ENCODE measurements at regions of chr6 and their contacts with region 1.

Region 1: GRCh38 chr6:13487122-13488014 is at the start of gene GFOD1:
- DNase-seq: peak; percentile 82 to 83
- ATAC-seq: peak; percentile 75 to 84
- H3K4me3 ChIP-seq: peak within 1 kb of the TSS; percentile 80 to 96 (median 89)
- H3K27ac ChIP-seq: peak within 1 kb of the TSS; percentile 87 to 98 (median 94)
- H3K4me1 ChIP-seq: peaks cover 26 to 35% of the 10 kb centered on the region in 2 donors
- H3K27me3 ChIP-seq: no peaks in the 10 kb centered on the region
- CTCF ChIP-seq: peak in 4 of 5 experiments; percentile 20 to 29 (median 24)
- POLR2A ChIP-seq: peak; percentile 91 to 97
- total RNA-seq, gene GFOD1: 9.0 to 31.8 (median 16.9) TPM

Region 2: DNA sequence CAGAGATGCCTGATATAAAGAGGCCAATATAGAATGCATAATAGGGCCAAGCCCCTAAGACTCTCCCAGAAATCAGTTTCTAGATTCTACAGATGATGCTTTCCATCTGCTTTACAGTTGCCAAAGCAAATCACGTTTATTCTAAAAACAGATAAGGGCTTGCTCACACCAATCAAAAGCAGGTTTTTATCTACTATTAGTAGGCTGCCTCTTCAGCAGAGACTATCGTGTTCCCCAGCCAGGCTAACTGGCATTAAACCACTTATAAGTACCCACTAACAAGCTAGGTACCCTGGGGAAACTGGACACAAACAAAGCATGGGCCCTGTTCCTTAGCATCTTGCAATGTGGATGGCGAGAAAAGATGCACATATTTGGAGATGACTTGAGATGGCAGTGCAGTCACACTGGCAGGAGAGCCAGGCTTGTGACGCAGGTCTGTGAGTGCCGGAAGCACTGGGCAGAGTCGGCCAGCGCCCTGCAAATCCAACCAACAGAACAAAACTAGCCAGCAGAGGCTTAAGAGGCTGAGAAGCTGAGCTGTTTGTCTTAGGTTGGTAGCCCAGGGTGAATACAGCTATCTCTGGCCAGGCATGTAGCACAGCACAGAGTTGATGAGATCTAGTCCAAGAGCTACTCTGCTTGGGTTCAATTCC is 73.3 kb before region 1 on chr6:
- in situ Hi-C with region 1: no loop called
- intact Hi-C with region 1: loop called (anchors 2 kb)
- DNase-seq: peak; percentile 53 to 84
- ATAC-seq: peak; percentile 84 to 85
- H3K4me3 ChIP-seq: no peak overlapping the region
- H3K27ac ChIP-seq: peak overlapping the region; percentile 63 to 78 (median 70)
- H3K4me1 ChIP-seq: peaks cover 73% of the 10 kb centered on the region in 2 donors
- H3K27me3 ChIP-seq: no peaks in the 10 kb centered on the region
- CTCF ChIP-seq: peak in 3 of 5 experiments; percentile 19 to 32 (median 25)
- POLR2A ChIP-seq: no peak

Region 3: DNA sequence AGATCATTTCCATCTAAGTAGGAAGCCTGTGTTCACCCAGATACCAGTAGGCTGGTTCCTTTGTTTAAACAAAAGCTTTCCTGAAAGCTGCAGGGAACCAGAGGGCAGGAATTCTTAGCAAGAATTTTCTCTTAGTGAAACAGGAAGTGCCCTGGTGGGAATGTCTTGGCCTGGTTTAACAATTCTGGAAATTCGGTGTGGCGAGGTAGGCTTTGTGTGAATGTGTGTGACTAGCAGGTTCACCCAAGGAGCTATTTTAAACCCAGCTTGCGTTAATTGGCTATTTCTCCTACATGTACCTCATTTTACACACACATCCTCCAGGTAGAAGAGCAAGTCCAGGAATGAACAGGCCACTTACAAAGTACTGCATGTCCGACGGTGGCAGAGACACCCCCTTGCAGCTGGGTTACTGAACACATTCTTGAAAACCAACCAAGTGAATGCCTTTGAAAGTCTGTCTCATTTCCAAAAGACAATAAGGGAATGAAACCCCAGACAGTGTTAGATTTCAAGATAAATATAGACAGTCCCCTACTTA is 64.6 kb before region 1 on chr6:
- in situ Hi-C with region 1: no loop called
- intact Hi-C with region 1: loop called (anchors 2 kb)
- DNase-seq: no peak
- ATAC-seq: peak; percentile 27 to 52
- H3K4me3 ChIP-seq: peak overlapping the region in 1 of 4 donors; percentile 5
- H3K27ac ChIP-seq: peak overlapping the region; percentile 72 to 80 (median 74)
- H3K4me1 ChIP-seq: peaks cover 89 to 96% of the 10 kb centered on the region in 2 donors
- H3K27me3 ChIP-seq: no peaks in the 10 kb centered on the region
- CTCF ChIP-seq: no peak
- POLR2A ChIP-seq: no peak

Region 4: DNA sequence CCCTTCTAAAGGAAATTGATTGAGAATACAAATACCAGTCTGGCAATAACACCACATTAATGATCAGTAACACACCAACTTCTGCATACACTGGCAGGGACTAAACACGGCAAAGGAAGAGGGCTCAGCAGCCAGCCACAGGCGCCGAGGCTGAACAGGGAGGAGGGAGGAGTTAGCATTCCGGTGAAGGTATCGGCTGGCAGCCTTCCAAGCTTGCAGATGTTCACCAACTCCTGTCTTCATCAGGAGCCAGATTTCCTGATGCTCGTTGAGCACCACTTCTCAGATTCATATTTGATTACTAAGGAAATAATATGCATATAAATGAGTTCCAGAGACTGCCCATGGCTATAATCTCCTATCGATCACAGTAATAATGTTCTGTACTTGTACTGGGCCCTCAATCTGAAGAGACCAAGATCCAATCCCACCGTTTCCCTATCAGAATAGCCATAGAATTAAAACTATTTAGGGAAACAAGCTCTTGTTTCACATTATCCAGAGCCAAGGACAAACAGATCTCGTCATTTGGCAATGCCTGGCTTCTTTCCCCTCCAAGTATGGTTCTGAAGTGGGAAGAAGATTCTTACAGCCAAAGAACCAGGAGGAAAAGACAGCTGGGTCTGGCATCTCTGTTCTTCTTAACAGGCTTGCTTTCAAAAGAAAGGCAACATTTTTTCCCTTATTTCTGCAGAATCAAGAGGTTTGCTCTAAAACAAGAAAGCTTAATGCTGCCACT is 42.2 kb before region 1 on chr6:
- in situ Hi-C with region 1: no loop called
- intact Hi-C with region 1: loop called (anchors 5 kb)
- DNase-seq: peak; percentile 64 to 73
- ATAC-seq: peak; percentile 92 to 93
- H3K4me3 ChIP-seq: peak overlapping the region in 3 of 4 donors; percentile 10 to 38 (median 24)
- H3K27ac ChIP-seq: peak overlapping the region; percentile 72 to 89 (median 82)
- H3K4me1 ChIP-seq: peaks cover 51 to 63% of the 10 kb centered on the region in 2 donors
- H3K27me3 ChIP-seq: no peaks in the 10 kb centered on the region
- CTCF ChIP-seq: no peak
- POLR2A ChIP-seq: no peak

Region 5: DNA sequence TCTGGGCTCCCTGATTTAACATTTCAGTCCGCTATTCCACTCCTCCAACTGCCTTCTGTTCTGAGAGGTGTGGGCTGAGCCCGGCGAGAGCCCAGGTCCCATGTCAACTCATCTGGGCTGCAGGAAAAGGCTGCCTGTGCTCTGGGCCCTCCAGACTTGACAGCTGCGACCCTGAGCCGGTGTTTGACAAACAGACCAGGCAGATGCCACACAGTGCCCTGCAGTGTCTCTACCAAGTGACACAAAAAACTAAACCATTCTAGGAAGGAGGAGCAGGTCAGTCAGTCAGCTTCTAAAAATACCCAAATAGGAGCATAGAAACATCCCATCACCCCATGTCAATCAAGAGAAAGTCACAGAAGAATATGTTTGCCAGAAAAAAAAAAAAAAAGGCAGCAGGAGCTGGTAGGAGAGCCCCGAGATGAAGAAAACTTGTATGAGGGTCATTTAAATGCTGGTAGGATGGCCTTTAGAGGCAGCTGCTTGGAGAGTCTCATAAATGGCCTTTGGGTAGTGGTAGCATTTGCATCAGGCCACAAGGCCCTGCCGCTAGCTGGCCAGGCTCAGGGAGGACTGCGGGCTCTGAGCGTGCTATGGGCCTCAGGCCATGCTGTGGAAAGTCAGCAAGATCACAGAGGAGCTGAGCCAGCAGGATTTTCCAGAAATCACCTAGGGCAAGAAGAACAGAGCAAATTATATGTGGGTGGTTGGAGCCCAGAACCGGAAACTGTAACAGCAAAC is 36.6 kb after region 1 on chr6:
- in situ Hi-C with region 1: no loop called
- intact Hi-C with region 1: loop called (anchors 2 kb)
- DNase-seq: peak; percentile 41 to 58
- ATAC-seq: peak; percentile 76 to 84
- H3K4me3 ChIP-seq: peak overlapping the region in 1 of 4 donors; percentile 19
- H3K27ac ChIP-seq: peak overlapping the region; percentile 80 to 100 (median 88)
- H3K4me1 ChIP-seq: peaks cover 47 to 52% of the 10 kb centered on the region in 2 donors
- H3K27me3 ChIP-seq: no peaks in the 10 kb centered on the region
- CTCF ChIP-seq: no peak
- POLR2A ChIP-seq: peak in 1 of 2 donors; percentile 49

Region 6: DNA sequence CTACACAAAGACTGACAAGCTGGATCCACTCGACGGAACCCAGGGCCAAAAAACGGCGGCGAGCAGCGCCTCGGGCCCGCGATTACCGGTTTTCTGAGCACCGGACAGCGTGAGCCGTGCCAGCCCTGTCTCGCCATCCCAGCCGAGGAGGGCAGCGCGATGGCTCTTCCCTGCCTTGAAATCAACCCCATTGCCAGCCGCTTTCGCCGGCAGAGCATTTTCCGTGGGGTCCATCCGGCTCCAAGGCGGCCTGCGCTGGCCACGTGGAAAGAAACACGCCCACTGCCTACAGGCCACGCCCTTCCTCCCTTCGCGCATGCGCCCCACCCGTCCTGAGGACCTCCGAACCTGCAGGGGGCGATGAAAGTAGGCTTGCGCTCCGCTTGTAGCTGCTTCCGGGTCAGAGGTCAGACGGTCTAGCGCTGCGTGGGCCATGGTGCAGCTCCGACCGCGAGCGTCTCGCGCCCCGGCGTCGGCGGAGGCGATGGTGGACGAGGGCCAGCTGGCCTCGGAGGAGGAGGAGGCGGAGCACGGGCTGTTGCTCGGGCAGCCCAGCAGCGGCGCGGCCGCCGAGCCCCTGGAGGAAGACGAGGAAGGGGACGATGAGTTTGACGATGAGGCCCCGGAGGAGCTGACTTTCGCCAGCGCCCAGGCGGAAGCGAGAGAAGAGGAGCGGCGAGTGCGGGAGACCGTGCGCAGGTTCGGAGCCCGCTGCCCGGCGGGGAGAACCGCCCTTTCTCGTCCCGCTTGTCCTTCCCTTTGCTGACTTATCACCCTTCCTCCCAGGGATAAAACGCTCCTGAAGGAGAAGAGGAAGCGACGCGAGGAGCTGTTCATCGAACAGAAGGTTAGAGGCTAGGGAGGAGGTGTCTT is 127.8 kb after region 1 on chr6 and contains the start of gene NOL7:
- in situ Hi-C with region 1: no loop called
- intact Hi-C with region 1: loop called (anchors 1 kb)
- DNase-seq: peak; percentile 97 to 98
- ATAC-seq: peak; percentile 95 to 97
- H3K4me3 ChIP-seq: peak within 1 kb of the TSS; percentile 68 to 95 (median 78)
- H3K27ac ChIP-seq: peak within 1 kb of the TSS; percentile 84 to 91 (median 88)
- H3K4me1 ChIP-seq: peaks cover 21 to 34% of the 10 kb centered on the region in 2 donors
- H3K27me3 ChIP-seq: no peaks in the 10 kb centered on the region
- CTCF ChIP-seq: peak; percentile 88 to 93 (median 92)
- POLR2A ChIP-seq: peak; percentile 67 to 73
- total RNA-seq, gene NOL7: 44.9 to 69.0 (median 63.8) TPM

Measured in gastrocnemius medialis (tissue), 4 donors.